OCI-LY7 (cell line): ENCODE measurements at regions of chr1 and their contacts with region 1.

Region 1: DNA sequence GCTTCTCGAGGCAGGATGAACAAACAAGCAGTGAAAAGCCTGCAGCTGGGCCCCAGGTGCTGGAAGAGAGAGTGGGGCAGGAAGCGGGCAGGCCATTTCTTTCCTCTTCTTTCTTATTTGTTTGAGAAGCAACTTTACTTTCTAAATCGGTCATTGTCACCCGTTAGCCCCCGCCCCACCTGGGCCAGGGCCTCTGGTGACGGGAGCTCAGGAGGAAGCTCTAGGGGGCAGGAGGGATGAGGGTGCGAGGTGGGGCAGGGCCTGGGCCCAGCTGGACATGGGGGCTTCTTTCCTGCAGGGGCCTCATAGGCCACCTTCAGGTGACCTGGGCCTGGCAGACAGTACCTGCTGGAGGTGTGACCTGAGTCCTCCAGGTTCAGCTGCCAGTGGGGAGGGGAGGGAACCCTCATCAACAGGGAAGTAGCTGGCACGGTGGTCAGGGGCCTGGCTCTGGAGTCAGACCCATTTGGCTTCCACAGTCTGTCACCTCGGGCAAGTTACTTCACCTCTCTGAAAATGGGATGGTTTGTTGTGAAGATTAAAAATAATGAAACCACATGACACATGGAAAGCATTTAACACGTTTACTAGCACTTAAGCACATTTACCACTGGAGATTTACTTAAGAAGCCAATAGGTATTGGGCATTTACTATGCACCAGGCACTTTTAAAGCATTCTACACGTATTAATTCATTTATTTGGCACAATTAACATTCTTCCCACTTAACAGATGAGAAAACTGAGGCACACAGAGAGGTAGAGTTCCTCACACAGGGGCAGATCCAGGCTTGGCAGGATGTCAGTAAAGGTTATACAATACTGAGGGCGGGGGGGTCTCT is 54.1 kb upstream of the ID3 start:
- DNase-seq: peak; percentile 96
- H3K4me3 ChIP-seq: peak overlapping the region; percentile 64
- H3K27ac ChIP-seq: peak overlapping the region; percentile 99
- H3K4me1 ChIP-seq: peaks cover 98% of the 10 kb centered on the region
- CTCF ChIP-seq: peak; percentile 46; the same call in 1 of the 2 replicates

Region 2: GRCh38 chr1:23362218-23362713 is 251.1 kb before region 1 on chr1:
- CTCF ChIA-PET with region 1: no interaction called
- POLR2A ChIA-PET with region 1: no interaction called
- intact Hi-C with region 1: no loop called
- DNase-seq: no peak
- H3K4me3 ChIP-seq: no peak overlapping the region
- H3K27ac ChIP-seq: no peak overlapping the region
- H3K4me1 ChIP-seq: peaks cover 11% of the 10 kb centered on the region
- CTCF ChIP-seq: no peak

Region 3: GRCh38 chr1:23496490-23497181 is 116.8 kb before region 1 on chr1:
- CTCF ChIA-PET with region 1: no interaction called
- POLR2A ChIA-PET with region 1: no interaction called
- intact Hi-C with region 1: no loop called
- DNase-seq: no peak
- H3K4me3 ChIP-seq: no peak overlapping the region
- H3K27ac ChIP-seq: no peak overlapping the region
- H3K4me1 ChIP-seq: peaks cover 21% of the 10 kb centered on the region
- CTCF ChIP-seq: no peak

Region 4: DNA sequence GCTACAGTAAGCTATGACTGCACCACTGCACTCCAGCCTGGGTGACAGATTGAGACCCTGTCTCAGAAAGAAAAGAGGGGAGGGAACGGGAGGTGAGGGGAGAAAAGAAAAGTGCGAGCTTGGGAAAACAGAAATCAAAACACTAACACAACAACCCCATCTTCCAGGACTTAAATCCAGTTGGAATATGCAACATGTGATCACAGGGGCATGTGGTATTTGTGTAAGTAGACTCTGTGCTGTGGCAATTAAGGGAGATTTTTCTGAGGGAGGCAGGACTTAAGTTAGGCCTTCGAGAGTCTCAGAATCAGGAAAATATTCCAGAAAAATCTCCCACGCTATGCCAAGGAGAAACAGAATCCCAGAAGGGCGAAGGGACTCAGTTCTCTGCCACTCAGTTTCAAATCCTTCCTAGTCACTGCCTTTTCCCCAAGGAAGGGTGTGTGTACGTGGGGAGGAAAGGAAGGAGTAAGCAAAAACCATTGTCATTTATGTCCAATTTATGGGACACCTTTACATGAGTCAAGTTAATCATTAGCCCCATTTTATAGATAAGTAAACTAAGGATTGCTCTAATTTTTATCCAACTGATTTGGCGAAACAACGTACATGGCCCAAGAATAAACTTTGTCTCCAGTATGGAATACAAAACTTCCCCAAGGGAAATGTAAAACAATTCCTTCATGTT is 66.4 kb before region 1 on chr1:
- CTCF ChIA-PET with region 1: interaction called, 3 read pairs
- POLR2A ChIA-PET with region 1: interaction called, 24 read pairs
- intact Hi-C with region 1: no loop called
- DNase-seq: no peak
- H3K4me3 ChIP-seq: no peak overlapping the region
- H3K27ac ChIP-seq: peak overlapping the region; percentile 40
- H3K4me1 ChIP-seq: peaks cover 89% of the 10 kb centered on the region
- CTCF ChIP-seq: no peak

Region 5: DNA sequence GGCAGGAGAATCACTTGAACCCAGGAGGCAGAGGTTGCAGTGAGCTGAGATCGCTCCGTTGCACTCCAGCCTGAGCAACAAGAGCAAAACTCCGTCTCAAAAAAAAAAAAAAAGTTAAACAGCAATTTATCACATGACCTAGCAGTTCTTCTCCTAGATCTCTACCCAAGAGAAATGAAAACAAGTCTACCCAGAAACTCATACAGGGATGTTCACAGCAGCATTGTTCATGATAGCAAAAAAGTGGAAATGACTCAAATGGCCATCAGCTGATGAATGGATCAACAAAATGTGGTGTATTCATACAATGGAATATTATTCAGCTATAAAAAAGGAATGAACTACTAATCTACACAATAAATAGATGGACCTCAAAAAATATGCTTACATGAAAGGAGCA is 41.9 kb before region 1 on chr1:
- CTCF ChIA-PET with region 1: interaction called, 4 read pairs
- POLR2A ChIA-PET with region 1: interaction called, 101 read pairs
- intact Hi-C with region 1: loop called (anchors 1 kb)
- DNase-seq: no peak
- H3K4me3 ChIP-seq: no peak overlapping the region
- H3K27ac ChIP-seq: peak overlapping the region; percentile 11
- H3K4me1 ChIP-seq: peaks cover 94% of the 10 kb centered on the region
- CTCF ChIP-seq: no peak

Region 6: DNA sequence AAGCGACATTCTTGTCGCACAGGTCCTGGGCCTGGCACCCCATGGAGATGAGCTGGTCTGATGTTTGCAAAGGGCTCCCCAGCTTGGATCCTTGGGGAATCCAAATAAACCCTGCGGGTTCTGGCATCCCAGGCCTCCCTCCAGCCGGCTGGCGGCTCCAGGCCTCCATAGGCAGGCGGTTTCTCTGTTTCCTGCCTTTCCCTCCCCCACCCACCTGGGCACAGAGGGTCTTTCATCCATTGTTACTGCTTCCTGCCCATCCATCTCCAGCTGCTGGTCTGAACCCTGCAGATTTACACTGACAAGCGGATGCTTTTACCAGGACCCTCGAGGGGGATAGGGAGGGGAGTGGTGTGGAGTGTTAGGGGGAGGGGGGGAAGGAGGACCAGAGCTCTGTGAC is 15.0 kb before region 1 on chr1:
- CTCF ChIA-PET with region 1: interaction called, 7 read pairs
- POLR2A ChIA-PET with region 1: interaction called, 186 read pairs
- intact Hi-C with region 1: loop called (anchors 1 kb)
- DNase-seq: peak; percentile 78
- H3K4me3 ChIP-seq: peak overlapping the region; percentile 53
- H3K27ac ChIP-seq: peak overlapping the region; percentile 94
- H3K4me1 ChIP-seq: peaks cover 100% of the 10 kb centered on the region
- CTCF ChIP-seq: no peak

Region 7: GRCh38 chr1:23634842-23635651 is 21.6 kb after region 1 on chr1:
- CTCF ChIA-PET with region 1: interaction called, 8 read pairs
- POLR2A ChIA-PET with region 1: interaction called, 37 read pairs
- intact Hi-C with region 1: loop called (anchors 1 kb)
- DNase-seq: peak; percentile 82
- H3K4me3 ChIP-seq: peak overlapping the region; percentile 52
- H3K27ac ChIP-seq: peak overlapping the region; percentile 85
- H3K4me1 ChIP-seq: peaks cover 92% of the 10 kb centered on the region
- CTCF ChIP-seq: peak; percentile 93

Region 8: GRCh38 chr1:23864801-23865542 is 251.6 kb after region 1 on chr1:
- CTCF ChIA-PET with region 1: no interaction called
- POLR2A ChIA-PET with region 1: no interaction called
- intact Hi-C with region 1: no loop called
- DNase-seq: no peak
- H3K4me3 ChIP-seq: no peak overlapping the region
- H3K27ac ChIP-seq: no peak overlapping the region
- H3K4me1 ChIP-seq: peaks cover 25% of the 10 kb centered on the region
- CTCF ChIP-seq: no peak

Region 9: GRCh38 chr1:23916209-23917131 is 303.1 kb after region 1 on chr1:
- CTCF ChIA-PET with region 1: no interaction called
- POLR2A ChIA-PET with region 1: no interaction called
- intact Hi-C with region 1: no loop called
- DNase-seq: peak; percentile 93
- H3K4me3 ChIP-seq: peak overlapping the region; percentile 29
- H3K27ac ChIP-seq: peak overlapping the region; percentile 71
- H3K4me1 ChIP-seq: peaks cover 76% of the 10 kb centered on the region
- CTCF ChIP-seq: peak; percentile 97